CD4-positive, alpha-beta T cell (primary cell): ENCODE measurements at regions of chr20 and their contacts with region 1.

Region 1: DNA sequence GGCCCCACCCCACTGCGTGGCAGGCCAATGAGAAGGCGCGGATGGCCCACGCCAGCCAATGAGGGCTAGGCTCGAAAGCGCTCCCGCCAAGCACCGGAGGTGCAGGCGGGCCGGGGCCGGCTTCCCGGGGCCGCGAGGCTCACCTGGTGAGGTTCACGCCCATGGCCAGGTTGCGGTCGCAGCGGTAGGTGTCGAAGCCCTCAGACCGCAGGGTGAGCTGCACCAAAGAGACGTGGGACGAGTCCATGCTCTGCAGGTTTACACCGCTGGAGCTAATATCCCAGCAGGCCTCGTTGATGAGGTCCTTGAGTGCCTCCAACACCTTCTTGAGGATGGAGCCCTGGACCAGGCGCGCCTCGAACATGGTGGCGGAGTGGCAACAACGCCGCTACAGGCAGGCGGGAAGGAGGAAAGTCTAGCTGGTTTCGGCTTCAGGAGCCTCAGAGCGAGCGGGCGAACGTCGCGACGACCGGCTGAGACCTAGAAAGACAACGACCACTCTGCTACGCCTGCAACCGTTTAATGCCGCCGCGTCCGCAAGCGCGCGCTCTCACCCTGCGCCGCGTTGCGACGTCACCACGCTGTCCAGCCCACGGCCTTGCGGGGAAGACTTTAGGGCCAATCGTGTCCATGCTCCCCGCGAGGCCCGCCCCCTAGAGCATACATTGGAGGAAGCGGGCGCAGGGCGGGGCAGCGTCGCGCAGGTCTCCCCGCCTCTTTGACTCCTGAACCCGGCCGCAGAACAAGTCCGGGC is at the start of gene PCNA:
- DNase-seq: peak; percentile 89 to 97 (median 94)
- ATAC-seq: peak; percentile 90
- H3K4me3 ChIP-seq: peak within 1 kb of the TSS; percentile 84
- H3K4me3 Mint-ChIP-seq: peak within 1 kb of the TSS; percentile 98
- H3K27ac ChIP-seq: peak within 1 kb of the TSS; percentile 80 to 90
- H3K27ac Mint-ChIP-seq: peak within 1 kb of the TSS; percentile 95
- H3K4me1 ChIP-seq: peaks cover 20% of the 10 kb centered on the region
- H3K4me1 Mint-ChIP-seq: peaks cover 40% of the 10 kb centered on the region
- H3K27me3 ChIP-seq: no peaks in the 10 kb centered on the region
- H3K27me3 Mint-ChIP-seq: no peaks in the 10 kb centered on the region
- CTCF ChIP-seq: no peak
- total RNA-seq, gene PCNA: 32.6 to 33.0 TPM

Region 2: GRCh38 chr20:4666001-4666479 is 453.6 kb before region 1 on chr20:
- CTCF ChIA-PET with region 1: no interaction called
- POLR2A ChIA-PET with region 1: no interaction called
- intact Hi-C with region 1: no loop called
- DNase-seq: peak in 12 of 14 experiments; percentile 28 to 83 (median 41)
- ATAC-seq: peak; percentile 79
- H3K4me3 ChIP-seq: peak overlapping the region; percentile 31
- H3K4me3 Mint-ChIP-seq: peak overlapping the region; percentile 52
- H3K27ac ChIP-seq: peak overlapping the region in 1 of 2 donors; percentile 72
- H3K27ac Mint-ChIP-seq: peak overlapping the region; percentile 72
- H3K4me1 ChIP-seq: peaks cover 24% of the 10 kb centered on the region
- H3K4me1 Mint-ChIP-seq: peaks cover 30% of the 10 kb centered on the region
- H3K27me3 ChIP-seq: no peaks in the 10 kb centered on the region
- H3K27me3 Mint-ChIP-seq: no peaks in the 10 kb centered on the region
- CTCF ChIP-seq: no peak

Region 3: DNA sequence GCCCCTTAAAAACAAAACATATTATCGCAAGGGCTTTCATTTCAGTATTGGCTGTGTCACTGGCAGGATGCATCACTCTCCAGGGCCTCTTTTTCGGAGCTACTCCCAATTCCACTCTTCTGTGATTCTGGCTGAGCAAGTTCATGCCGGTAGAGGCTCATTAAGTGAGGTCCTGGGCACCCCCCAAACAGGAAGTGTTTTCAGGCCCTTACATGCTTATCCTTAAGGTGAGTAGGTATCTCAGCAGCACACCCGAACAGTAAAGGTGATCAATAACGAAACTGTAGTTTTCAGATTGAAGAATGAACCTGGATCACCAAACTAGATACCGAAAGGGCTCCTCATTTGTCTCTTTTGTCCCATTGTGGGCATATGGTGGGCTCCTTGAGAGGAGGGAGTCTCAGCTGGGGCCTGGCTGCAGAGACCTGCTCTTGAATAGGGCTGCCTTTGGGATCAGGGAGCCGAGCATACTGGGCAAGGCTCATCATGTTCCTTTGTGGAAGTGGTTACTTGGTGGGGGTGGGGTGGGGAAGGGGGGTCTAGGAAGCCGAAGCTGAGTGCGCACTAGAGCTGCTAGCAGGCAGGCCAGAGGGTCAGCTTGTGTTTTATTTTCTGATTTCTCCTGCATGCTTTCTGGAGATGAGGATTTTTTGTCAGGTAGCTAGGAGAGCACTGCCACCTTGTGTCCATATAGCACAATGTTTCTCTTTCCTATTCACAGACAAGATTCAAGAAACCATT is 72.4 kb after region 1 on chr20:
- CTCF ChIA-PET with region 1: interaction called, 12 read pairs
- POLR2A ChIA-PET with region 1: interaction called, 7 read pairs
- intact Hi-C with region 1: no loop called
- DNase-seq: peak in 10 of 14 experiments; percentile 5 to 79 (median 16)
- ATAC-seq: peak; percentile 78
- H3K4me3 ChIP-seq: no peak overlapping the region
- H3K4me3 Mint-ChIP-seq: no peak overlapping the region
- H3K27ac ChIP-seq: no peak overlapping the region
- H3K27ac Mint-ChIP-seq: peak overlapping the region; percentile 54
- H3K4me1 ChIP-seq: peaks cover 4% of the 10 kb centered on the region
- H3K4me1 Mint-ChIP-seq: peaks cover 6% of the 10 kb centered on the region
- H3K27me3 ChIP-seq: no peaks in the 10 kb centered on the region
- H3K27me3 Mint-ChIP-seq: no peaks in the 10 kb centered on the region
- CTCF ChIP-seq: peak; percentile 73